PC-9 (cell line): ENCODE measurements at regions of chr10 and their contacts with region 1.

Region 1: DNA sequence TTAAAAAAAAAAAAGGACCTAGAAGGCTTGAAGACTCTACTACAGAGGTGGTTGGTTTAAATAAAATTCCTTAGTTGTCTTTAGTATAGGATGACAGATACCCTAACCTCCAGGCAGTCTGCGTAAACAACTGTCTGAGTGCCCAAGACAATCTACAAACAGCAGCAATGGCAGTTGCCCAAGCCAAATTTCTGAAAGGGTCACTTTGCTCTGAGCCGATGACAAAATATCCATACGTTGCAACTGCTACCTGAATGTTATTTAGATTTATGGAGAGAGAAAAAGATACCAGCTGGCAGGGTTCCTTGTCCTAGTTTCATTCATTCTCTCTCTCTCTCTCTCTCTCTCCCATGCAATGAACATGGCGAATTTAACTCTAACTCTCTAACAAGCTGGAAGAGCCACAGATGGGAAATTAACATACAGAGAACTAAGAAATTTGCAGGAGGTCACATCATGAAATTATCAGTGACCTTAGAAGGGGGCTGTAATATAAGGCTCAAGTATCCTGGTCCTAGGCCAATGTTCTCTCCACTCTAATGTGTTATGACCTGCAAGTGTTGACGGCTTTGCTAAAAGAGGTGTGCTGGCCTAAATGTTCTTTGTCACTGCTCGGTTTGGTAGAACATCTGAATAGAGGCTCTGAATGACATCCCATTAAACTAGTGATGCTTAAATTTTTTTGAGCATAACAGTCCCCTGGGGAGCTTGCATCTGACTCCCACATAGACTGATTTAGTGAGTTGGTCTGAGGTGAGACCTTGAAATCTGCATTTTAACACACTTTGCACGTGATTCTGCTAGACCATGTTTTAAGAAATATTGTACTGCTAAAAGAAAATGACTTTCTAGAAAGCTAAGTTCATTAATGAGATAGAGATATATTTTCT is 129.4 kb downstream of the GFRA1 start:
- DNase-seq: no peak
- H3K4me3 ChIP-seq: no peak overlapping the region
- H3K27ac ChIP-seq: no peak overlapping the region
- H3K4me1 ChIP-seq: no peaks in the 10 kb centered on the region
- H3K27me3 ChIP-seq: no peaks in the 10 kb centered on the region
- CTCF ChIP-seq: no peak

Region 2: GRCh38 chr10:116164291-116164690 is 20.7 kb after region 1 on chr10:
- CTCF ChIA-PET with region 1: no interaction called
- POLR2A ChIA-PET with region 1: no interaction called
- intact Hi-C with region 1: no loop called
- DNase-seq: no peak
- H3K4me3 ChIP-seq: no peak overlapping the region
- H3K27ac ChIP-seq: no peak overlapping the region
- H3K4me1 ChIP-seq: no peaks in the 10 kb centered on the region
- H3K27me3 ChIP-seq: no peaks in the 10 kb centered on the region
- CTCF ChIP-seq: no peak

Region 3: GRCh38 chr10:116331815-116332214 is 188.2 kb after region 1 on chr10:
- CTCF ChIA-PET with region 1: no interaction called
- POLR2A ChIA-PET with region 1: no interaction called
- intact Hi-C with region 1: loop called (anchors 5 kb)
- DNase-seq: no peak
- H3K4me3 ChIP-seq: no peak overlapping the region
- H3K27ac ChIP-seq: no peak overlapping the region
- H3K4me1 ChIP-seq: no peaks in the 10 kb centered on the region
- H3K27me3 ChIP-seq: no peaks in the 10 kb centered on the region
- CTCF ChIP-seq: no peak